ENCODE measurements at regions of chr17 and their contacts with region 1.

Region 1: GRCh38 chr17:60971515-60972369 is 294.1 kb downstream of the BCAS3 start:
- DNase-seq: peak; percentile 66
- H3K4me3 Mint-ChIP-seq: no peak overlapping the region
- H3K27ac Mint-ChIP-seq: no peak overlapping the region
- H3K4me1 Mint-ChIP-seq: no peaks in the 10 kb centered on the region
- H3K27me3 Mint-ChIP-seq: no peaks in the 10 kb centered on the region

Region 2: GRCh38 chr17:60720763-60721531 is 250.8 kb before region 1 on chr17:
- CTCF ChIA-PET with region 1: interaction called, 16 read pairs
- DNase-seq: peak; percentile 43
- H3K4me3 Mint-ChIP-seq: no peak overlapping the region
- H3K27ac Mint-ChIP-seq: no peak overlapping the region
- H3K4me1 Mint-ChIP-seq: no peaks in the 10 kb centered on the region
- H3K27me3 Mint-ChIP-seq: no peaks in the 10 kb centered on the region

Region 3: DNA sequence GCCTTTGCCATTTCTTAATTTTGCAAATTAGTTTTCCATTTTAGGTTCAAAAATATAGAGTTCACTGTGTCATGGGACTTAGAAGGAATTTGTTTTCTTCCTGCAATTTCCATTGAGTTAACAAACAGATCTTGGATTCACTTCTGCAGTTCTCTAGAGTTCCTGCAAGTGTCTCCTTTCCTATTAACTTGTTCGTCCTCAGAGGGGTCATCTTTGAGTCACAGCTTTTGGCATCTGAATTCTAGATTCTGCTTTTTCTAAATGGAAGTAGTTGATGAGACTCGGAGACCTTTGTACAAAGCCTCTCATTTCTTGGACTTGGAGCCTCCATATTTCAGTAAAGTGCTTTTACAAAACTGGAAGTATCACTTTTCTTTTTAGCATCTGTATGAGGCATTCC is 29.2 kb after region 1 on chr17:
- CTCF ChIA-PET with region 1: interaction called, 10 read pairs
- DNase-seq: no peak
- H3K4me3 Mint-ChIP-seq: no peak overlapping the region
- H3K27ac Mint-ChIP-seq: no peak overlapping the region
- H3K4me1 Mint-ChIP-seq: peaks cover 6% of the 10 kb centered on the region
- H3K27me3 Mint-ChIP-seq: no peaks in the 10 kb centered on the region

Region 4: GRCh38 chr17:61360194-61360943 is 388.6 kb after region 1 on chr17:
- CTCF ChIA-PET with region 1: interaction called, 15 read pairs
- DNase-seq: no peak
- H3K4me3 Mint-ChIP-seq: no peak overlapping the region
- H3K27ac Mint-ChIP-seq: no peak overlapping the region
- H3K4me1 Mint-ChIP-seq: no peaks in the 10 kb centered on the region
- H3K27me3 Mint-ChIP-seq: no peaks in the 10 kb centered on the region

Region 5: DNA sequence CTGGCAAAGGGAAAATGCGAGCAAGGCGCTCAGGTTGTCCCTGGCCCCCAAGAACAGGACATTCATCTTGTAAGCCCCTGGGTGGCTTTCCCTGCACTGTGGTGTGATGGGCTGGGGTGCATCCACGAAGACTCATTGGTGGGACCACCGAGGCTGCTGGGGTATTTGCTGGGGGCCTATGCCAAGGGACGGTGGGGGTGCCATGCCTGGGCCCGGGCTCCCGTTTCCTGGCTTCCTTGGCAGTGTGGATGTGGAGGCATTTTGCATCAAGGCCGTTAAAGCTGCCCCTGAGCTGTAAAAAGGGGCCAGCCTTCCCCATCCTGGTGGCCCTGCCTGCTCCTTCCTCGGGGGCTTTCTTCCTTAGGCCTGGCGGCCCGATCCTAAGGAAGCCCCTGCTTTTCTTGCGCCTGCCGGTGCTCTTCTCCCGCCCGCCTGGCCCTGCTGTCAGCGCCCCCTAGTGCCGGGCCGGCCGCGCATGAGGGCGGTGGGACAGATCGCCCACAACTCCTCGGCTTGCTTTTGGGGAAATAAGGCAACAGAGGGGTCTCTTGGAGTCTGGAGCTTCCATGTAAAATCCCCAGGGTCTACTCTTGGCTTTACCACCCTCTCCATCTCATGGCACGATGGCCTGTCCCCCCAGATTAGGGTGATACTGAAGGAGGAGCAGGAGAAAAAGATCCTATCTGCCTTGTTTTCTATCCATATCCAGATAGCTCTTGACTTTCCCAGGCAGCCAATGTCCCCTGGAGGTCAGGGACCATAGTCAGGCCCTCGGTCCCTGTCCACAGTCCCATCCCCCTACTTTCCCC is 418.1 kb after region 1 on chr17:
- CTCF ChIA-PET with region 1: interaction called, 17 read pairs
- DNase-seq: peak; percentile 58
- H3K4me3 Mint-ChIP-seq: no peak overlapping the region
- H3K27ac Mint-ChIP-seq: no peak overlapping the region
- H3K4me1 Mint-ChIP-seq: no peaks in the 10 kb centered on the region
- H3K27me3 Mint-ChIP-seq: peaks cover 59% of the 10 kb centered on the region